Heart left ventricle (tissue), 16 donors: ENCODE measurements at regions of chr2 and their contacts with region 1.

Region 1: GRCh38 chr2:157777427-157777826 is 98.7 kb downstream of the ACVR1 start:
- DNase-seq: peak in 1 of 5 donors; percentile 32
- ATAC-seq: no peak
- H3K4me3 ChIP-seq: no peak overlapping the region
- H3K27ac ChIP-seq: no peak overlapping the region
- H3K4me1 ChIP-seq: peaks cover 0 to 13% (median 9%) of the 10 kb centered on the region in 12 donors
- H3K27me3 ChIP-seq: no peaks in the 10 kb centered on the region
- CTCF ChIP-seq: peak; percentile 52 to 83 (median 73)
- POLR2A ChIP-seq: no peak

Region 2: DNA sequence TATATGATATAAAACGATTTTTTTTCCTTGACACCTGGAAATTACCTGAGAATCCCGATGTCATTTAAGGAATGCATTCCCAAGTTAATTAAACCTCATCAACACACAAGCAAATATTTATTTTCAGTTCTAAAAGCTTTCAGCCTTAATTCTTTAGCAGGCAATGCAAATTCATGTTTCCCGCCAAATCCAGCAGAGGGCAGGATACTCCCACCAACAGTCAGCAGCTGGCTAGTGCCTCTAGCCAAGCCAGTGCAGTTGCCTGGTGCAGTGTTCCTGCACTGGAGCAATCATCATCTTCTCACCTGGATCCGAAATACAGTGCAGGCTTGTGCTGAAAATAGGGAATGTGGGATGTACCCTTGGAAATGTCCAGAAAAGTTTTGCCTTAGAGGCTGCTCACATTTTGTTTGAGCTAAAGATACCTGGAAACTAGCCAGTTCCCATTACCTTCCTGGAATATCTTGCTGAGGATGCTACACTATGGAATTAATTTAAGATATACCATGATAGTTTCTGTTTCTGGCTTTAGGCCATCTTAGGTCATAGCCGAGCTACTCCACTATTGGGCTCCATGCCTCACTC is 285.1 kb before region 1 on chr2:
- intact Hi-C with region 1: loop called in 5 of 10 experiments (anchors 10 kb)
- DNase-seq: peak; percentile 52 to 70 (median 64)
- ATAC-seq: peak in 3 of 4 donors; percentile 75 to 88 (median 85)
- H3K4me3 ChIP-seq: no peak overlapping the region
- H3K27ac ChIP-seq: no peak overlapping the region
- H3K4me1 ChIP-seq: no peaks in the 10 kb centered on the region
- H3K27me3 ChIP-seq: no peaks in the 10 kb centered on the region
- CTCF ChIP-seq: peak; percentile 53 to 80 (median 70)
- POLR2A ChIP-seq: no peak

Region 3: DNA sequence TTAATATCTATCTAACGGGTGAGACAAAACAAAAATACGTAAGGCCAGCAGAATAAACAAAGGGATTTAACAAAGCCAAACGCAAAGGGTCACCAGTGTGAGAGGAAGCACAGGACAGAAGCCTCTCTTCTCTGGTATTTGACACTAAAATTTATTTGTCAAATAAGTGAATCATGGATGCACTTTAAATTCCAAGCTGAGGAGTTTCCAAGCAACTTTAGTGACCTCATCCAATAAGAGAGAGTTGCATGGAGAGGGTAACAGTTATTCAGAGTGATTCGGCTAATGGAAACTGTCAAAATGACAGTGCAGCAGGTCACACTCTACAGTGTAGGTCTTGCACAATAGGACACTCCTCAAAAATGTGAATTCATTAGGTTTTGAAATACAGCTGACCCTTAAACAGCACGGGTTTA is 44.9 kb before region 1 on chr2:
- intact Hi-C with region 1: no loop called
- DNase-seq: no peak
- ATAC-seq: no peak
- H3K4me3 ChIP-seq: no peak overlapping the region
- H3K27ac ChIP-seq: no peak overlapping the region
- H3K4me1 ChIP-seq: no peaks in the 10 kb centered on the region
- H3K27me3 ChIP-seq: no peaks in the 10 kb centered on the region
- CTCF ChIP-seq: no peak
- POLR2A ChIP-seq: no peak

Region 4: GRCh38 chr2:157747695-157748370 is 29.6 kb before region 1 on chr2:
- intact Hi-C with region 1: no loop called
- DNase-seq: peak in 1 of 5 donors; percentile 36
- ATAC-seq: peak in 2 of 4 donors; percentile 41 to 46
- H3K4me3 ChIP-seq: no peak overlapping the region
- H3K27ac ChIP-seq: peak overlapping the region in 1 of 12 donors; percentile 4
- H3K4me1 ChIP-seq: peaks cover 0 to 34% (median 5%) of the 10 kb centered on the region in 12 donors
- H3K27me3 ChIP-seq: no peaks in the 10 kb centered on the region
- CTCF ChIP-seq: no peak
- POLR2A ChIP-seq: no peak

Region 5: GRCh38 chr2:157830696-157831570 is 53.5 kb after region 1 on chr2:
- intact Hi-C with region 1: no loop called
- DNase-seq: no peak
- ATAC-seq: peak; percentile 45 to 87 (median 76)
- H3K4me3 ChIP-seq: no peak overlapping the region
- H3K27ac ChIP-seq: peak overlapping the region; percentile 12 to 78 (median 60)
- H3K4me1 ChIP-seq: peaks cover 5 to 35% (median 23%) of the 10 kb centered on the region in 12 donors
- H3K27me3 ChIP-seq: no peaks in the 10 kb centered on the region
- CTCF ChIP-seq: no peak
- POLR2A ChIP-seq: no peak

Region 6: DNA sequence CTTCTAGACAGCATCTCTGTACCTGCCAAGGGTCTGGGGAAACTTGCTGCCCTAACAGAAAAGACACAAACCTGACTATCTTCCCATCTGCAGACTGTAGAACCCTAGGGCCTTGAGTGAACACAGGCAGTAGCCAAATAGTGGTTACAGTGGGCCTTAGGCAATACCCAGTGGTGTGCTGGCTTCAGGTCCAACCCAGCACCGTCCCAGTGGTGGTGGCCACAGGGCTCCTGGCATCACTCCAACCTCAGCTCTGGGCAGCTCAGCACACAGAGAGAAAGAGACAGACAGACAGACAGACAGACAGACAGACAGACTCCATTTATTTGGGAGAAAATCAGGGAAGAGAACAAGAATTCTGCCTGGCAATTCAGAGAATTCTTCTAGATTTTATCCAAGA is 294.9 kb after region 1 on chr2:
- intact Hi-C with region 1: no loop called
- DNase-seq: no peak
- ATAC-seq: no peak
- H3K4me3 ChIP-seq: no peak overlapping the region
- H3K27ac ChIP-seq: no peak overlapping the region
- H3K4me1 ChIP-seq: no peaks in the 10 kb centered on the region
- H3K27me3 ChIP-seq: no peaks in the 10 kb centered on the region
- CTCF ChIP-seq: no peak
- POLR2A ChIP-seq: no peak